ENCODE measurements at regions of chr14 and their contacts with region 1.

Region 1: GRCh38 chr14:76138758-76139723 is 12.7 kb upstream of the GPATCH2L start:
- DNase-seq: peak; percentile 51 to 79 (median 65)
- ATAC-seq: peak; percentile 92
- H3K4me3 ChIP-seq: peak overlapping the region; percentile 33
- H3K27ac ChIP-seq: peak overlapping the region; percentile 33; the same call in 1 of the 3 replicates
- H3K4me1 ChIP-seq: peaks cover 8 to 14% of the 10 kb centered on the region in 2 experiments; a peak in 4 of 5 replicates
- H3K27me3 ChIP-seq: peaks cover 4 to 28% of the 10 kb centered on the region in 2 experiments; a peak in 3 of 5 replicates
- CTCF ChIP-seq: no peak
- EP300 ChIP-seq: no peak
- POLR2A ChIP-seq: no peak
- RAD21 ChIP-seq: no peak

Region 2: DNA sequence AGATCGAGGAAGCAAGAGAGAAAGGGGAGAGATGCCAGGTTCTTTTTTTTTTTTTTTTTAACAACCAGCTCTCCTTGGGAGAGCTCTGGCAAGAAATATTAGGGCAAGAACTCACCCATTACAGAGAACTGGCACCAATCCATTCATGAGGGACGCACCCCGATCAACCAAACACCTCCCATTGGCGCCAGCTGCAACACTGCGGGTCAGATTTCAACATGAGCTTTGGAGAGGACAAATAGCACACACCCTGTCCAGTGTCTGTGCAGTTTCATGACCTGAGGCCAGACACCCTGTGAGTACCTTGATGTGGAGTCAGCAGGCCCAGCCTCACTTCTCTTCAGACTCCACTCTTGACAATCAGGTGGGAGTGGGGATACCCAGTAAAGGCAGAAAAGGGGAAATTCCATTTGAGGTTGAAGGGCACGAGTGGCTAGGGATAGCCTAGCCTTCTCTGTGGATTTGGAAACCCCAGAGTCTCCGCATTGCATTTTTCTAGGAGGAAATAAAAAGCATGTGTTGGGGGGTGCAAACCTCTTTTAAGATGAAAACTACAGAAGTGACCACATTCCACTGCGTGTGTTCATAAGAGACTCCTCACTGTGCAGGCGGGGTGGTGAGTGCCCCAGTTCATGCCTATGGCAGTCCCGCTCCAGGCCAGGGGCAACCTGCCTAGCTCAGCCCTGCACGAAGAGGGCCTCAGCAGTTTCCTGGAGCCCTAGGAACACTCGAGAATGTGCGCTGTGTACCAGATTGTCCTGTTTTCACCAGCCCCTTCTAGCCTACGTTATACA is 29.8 kb before region 1 on chr14:
- CTCF ChIA-PET with region 1: no interaction called
- POLR2A ChIA-PET with region 1: no interaction called
- in situ Hi-C with region 1: no loop called
- intact Hi-C with region 1: no loop called
- DNase-seq: no peak
- ATAC-seq: no peak; the same call in 2 of the 3 replicates
- H3K4me3 ChIP-seq: no peak overlapping the region
- H3K27ac ChIP-seq: no peak overlapping the region
- H3K4me1 ChIP-seq: peaks cover 0 to 8% of the 10 kb centered on the region in 2 experiments; a peak in 2 of 5 replicates
- H3K27me3 ChIP-seq: peaks cover 0 to 67% of the 10 kb centered on the region in 2 experiments; a peak in 3 of 5 replicates
- CTCF ChIP-seq: no peak
- EP300 ChIP-seq: no peak
- POLR2A ChIP-seq: no peak
- RAD21 ChIP-seq: no peak

Region 3: GRCh38 chr14:76154539-76155126 is 15.6 kb after region 1 on chr14:
- CTCF ChIA-PET with region 1: no interaction called
- POLR2A ChIA-PET with region 1: interaction called, 4 read pairs
- in situ Hi-C with region 1: no loop called
- intact Hi-C with region 1: loop called (anchors 2 kb)
- DNase-seq: peak in 1 of 4 experiments; percentile 8
- ATAC-seq: no peak
- H3K4me3 ChIP-seq: no peak overlapping the region
- H3K27ac ChIP-seq: no peak overlapping the region
- H3K4me1 ChIP-seq: peaks cover 15 to 28% of the 10 kb centered on the region in 2 experiments; a peak in 4 of 5 replicates
- H3K27me3 ChIP-seq: no peaks in the 10 kb centered on the region
- CTCF ChIP-seq: no peak
- EP300 ChIP-seq: no peak
- POLR2A ChIP-seq: no peak
- RAD21 ChIP-seq: no peak

Region 4: GRCh38 chr14:76257111-76257803 is 118.2 kb after region 1 on chr14:
- CTCF ChIA-PET with region 1: no interaction called
- POLR2A ChIA-PET with region 1: no interaction called
- in situ Hi-C with region 1: no loop called
- intact Hi-C with region 1: loop called (anchors 5 kb)
- DNase-seq: peak; percentile 68 to 83 (median 74)
- ATAC-seq: peak; percentile 76
- H3K4me3 ChIP-seq: peak overlapping the region; percentile 2; the same call in 1 of the 2 replicates
- H3K27ac ChIP-seq: peak overlapping the region; percentile 91
- H3K4me1 ChIP-seq: peaks cover 15 to 46% of the 10 kb centered on the region in 2 experiments
- H3K27me3 ChIP-seq: no peaks in the 10 kb centered on the region
- CTCF ChIP-seq: no peak
- EP300 ChIP-seq: peak; percentile 88
- POLR2A ChIP-seq: no peak
- RAD21 ChIP-seq: no peak